ENCODE measurements at regions of chr19 and their contacts with region 1.

Region 1: DNA sequence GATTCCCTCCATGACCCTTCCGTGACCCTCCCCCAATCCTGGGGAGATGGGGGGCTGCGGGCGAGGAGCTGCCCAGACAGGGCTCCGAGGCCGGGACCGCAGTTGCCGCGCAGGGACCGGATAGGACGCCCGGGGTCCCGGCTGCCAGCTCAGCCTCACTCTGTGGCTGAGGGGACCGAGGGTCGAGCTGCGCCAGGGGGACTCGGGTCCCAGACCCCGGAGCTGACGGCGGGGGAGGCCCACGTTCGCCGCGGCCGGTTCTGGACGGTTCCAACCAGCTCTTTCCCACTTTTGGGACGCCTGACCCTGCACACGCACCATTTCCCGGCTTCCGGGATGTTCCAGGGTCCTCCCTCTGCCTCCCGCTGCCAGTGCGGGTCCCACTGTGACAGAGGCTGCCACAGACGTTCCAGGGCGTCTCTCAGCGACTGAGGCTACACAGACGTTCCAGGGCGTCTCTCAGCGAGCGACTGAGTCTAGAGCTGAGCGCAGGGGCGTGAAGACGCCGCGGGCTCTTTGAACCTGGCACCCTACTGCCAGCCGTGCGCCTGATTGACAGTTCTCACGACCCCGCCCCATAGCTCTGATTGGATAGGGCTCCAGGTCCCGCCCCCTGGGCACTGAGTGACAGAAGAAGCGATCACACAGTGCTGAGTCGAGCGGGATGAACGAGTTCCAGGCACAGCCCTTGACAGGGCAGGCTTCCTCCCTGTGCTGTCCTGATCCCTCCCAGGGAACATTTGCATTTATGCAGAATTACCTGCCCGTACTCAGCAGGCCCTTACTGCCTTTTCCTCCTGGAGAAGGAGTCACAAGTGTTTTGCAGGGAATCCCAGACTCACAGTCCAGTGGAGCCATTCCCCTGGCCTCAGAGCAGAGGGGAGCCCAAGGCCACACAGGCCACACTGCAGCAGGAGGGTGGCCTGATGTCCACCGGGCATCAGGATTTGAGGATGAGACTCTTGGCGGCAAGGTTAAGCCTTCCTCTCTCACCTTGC is at the start of gene ZNF563:
- DNase-seq: peak; percentile 97 to 99
- H3K4me3 ChIP-seq: peak within 1 kb of the TSS; percentile 82 to 94
- H3K27ac ChIP-seq: peak within 1 kb of the TSS; percentile 93 to 95
- H3K4me1 ChIP-seq: peaks cover 0 to 2% of the 10 kb centered on the region in 2 donors
- H3K27me3 ChIP-seq: no peaks in the 10 kb centered on the region
- CTCF ChIP-seq: no peak
- total RNA-seq, gene ZNF563: not detected

Region 2: DNA sequence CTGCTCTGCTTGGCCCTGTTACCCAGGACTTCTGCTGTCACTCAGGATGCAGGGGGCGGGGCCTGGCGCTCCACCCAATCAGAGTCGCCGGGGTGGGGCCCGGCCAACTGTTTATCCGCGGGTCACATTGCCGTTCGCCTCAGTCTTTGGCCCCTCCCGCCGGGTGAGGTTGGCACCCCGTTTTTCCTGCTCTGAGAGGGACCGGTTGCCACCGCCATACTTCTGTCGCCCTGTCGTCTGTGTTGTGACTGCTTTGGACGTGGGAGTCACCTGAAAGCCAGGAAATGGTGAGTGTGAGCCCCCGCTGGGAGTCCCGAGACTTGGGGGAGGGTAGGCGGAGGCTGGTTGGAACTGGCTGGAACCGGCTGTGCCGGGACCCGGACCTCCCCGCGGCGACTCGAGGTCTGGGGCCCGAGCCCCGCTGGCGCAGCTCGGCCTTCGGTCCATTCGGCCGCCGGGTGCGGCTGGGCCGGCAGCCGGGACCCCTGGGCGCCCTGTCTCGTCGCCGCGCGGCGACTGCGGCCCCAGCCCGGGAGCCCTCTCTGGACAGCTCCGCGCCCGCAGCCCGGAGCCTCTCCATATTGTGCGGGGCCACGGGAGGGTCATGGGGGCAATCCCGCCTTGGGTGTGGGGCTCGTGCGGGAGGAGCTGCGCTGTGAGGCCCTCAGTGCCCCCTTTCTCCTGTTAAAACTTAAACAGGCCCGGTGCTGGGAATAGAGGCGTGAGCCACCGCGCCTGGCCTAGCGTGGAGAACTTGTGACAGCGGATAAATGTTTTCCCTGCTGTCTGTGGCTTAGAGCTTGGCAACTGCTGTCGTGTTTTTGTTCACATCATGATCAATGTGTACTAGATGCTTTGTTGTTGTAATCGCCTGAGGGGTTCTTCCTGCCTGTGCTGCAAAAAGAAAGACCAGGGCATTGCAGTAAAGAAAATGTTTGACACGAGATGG is 268.6 kb before region 1 on chr19 and contains the start of gene ZNF844:
- intact Hi-C with region 1: loop called (anchors 10 kb)
- DNase-seq: peak; percentile 95 to 98
- H3K4me3 ChIP-seq: peak within 1 kb of the TSS; percentile 84 to 85
- H3K27ac ChIP-seq: peak within 1 kb of the TSS; percentile 87 to 93
- H3K4me1 ChIP-seq: peaks cover 3 to 7% of the 10 kb centered on the region in 2 donors
- H3K27me3 ChIP-seq: no peaks in the 10 kb centered on the region
- CTCF ChIP-seq: no peak
- total RNA-seq, gene ZNF844: 8.0 TPM

Region 3: GRCh38 chr19:12278713-12279112 is 54.7 kb before region 1 on chr19:
- intact Hi-C with region 1: no loop called
- DNase-seq: no peak
- H3K4me3 ChIP-seq: no peak overlapping the region
- H3K27ac ChIP-seq: no peak overlapping the region
- H3K4me1 ChIP-seq: no peaks in the 10 kb centered on the region
- H3K27me3 ChIP-seq: no peaks in the 10 kb centered on the region
- CTCF ChIP-seq: no peak

Region 4: DNA sequence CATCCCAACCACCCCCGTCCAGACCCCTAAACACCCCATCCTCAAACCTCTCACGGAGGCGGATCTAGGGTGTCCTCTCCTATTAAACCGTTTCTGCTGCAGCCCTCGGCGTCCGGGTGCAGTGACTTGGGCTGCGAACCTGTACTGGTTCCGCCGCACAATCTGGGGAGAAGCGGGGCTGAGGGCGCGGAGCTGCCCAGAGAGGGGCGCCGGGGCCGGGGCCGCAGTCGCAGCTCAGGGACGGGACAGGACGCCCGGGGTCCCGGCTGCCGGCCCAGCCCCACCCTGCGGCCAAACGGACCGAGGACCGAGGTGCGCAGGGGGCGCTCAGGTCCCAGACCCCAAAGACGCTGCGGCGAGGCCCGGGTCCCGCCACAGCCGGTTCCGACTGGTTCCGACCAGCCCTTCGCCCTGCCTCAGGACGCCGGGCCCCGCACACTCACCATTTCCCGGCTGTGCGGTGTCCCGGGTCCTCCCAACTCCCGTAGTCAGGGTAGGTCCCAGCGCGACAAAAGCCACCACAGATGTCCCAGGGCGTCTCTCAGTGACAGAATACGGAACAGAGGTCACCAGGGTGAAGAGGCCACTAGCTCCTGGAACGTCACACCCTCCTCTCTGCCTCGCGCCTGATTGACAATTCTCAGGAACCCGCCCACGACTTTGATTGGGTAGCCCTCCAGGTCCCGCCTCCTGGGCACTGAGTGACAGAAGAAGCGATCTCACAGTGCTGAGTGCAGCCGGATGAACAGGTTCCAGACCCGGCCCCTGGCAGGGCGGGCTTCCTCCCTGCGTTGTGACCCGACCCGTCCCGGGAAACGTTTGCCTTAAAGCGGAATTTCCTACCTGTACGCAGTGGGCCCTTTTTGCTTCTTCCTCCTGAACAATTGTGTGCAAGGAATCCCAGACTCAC is 39.0 kb before region 1 on chr19 and contains the start of gene ZNF44:
- intact Hi-C with region 1: loop called (anchors 2 kb)
- DNase-seq: peak; percentile 97 to 99
- H3K4me3 ChIP-seq: peak within 1 kb of the TSS; percentile 76 to 80
- H3K27ac ChIP-seq: peak within 1 kb of the TSS; percentile 84
- H3K4me1 ChIP-seq: peaks cover 8 to 15% of the 10 kb centered on the region in 2 donors
- H3K27me3 ChIP-seq: no peaks in the 10 kb centered on the region
- CTCF ChIP-seq: no peak
- total RNA-seq, gene ZNF44: 10.4 TPM

Region 5: GRCh38 chr19:12400633-12401502 is 67.4 kb after region 1 on chr19 and contains the start of gene ZNF799:
- intact Hi-C with region 1: loop called (anchors 5 kb)
- DNase-seq: peak; percentile 95 to 99
- H3K4me3 ChIP-seq: peak within 1 kb of the TSS; percentile 77 to 95
- H3K27ac ChIP-seq: peak within 1 kb of the TSS; percentile 74 to 80
- H3K4me1 ChIP-seq: peaks cover 3 to 4% of the 10 kb centered on the region in 2 donors
- H3K27me3 ChIP-seq: no peaks in the 10 kb centered on the region
- CTCF ChIP-seq: no peak
- total RNA-seq, gene ZNF799: 3.1 TPM

Region 6: GRCh38 chr19:12484371-12485051 is 151.1 kb after region 1 on chr19 and contains the start of gene ZNF709:
- intact Hi-C with region 1: no loop called
- DNase-seq: peak; percentile 63 to 94
- H3K4me3 ChIP-seq: peak within 1 kb of the TSS; percentile 86 to 98
- H3K27ac ChIP-seq: peak within 1 kb of the TSS; percentile 74 to 76
- H3K4me1 ChIP-seq: peaks cover 0 to 15% of the 10 kb centered on the region in 2 donors
- H3K27me3 ChIP-seq: no peaks in the 10 kb centered on the region
- CTCF ChIP-seq: no peak
- total RNA-seq, gene ZNF709: 3.4 TPM

Region 7: DNA sequence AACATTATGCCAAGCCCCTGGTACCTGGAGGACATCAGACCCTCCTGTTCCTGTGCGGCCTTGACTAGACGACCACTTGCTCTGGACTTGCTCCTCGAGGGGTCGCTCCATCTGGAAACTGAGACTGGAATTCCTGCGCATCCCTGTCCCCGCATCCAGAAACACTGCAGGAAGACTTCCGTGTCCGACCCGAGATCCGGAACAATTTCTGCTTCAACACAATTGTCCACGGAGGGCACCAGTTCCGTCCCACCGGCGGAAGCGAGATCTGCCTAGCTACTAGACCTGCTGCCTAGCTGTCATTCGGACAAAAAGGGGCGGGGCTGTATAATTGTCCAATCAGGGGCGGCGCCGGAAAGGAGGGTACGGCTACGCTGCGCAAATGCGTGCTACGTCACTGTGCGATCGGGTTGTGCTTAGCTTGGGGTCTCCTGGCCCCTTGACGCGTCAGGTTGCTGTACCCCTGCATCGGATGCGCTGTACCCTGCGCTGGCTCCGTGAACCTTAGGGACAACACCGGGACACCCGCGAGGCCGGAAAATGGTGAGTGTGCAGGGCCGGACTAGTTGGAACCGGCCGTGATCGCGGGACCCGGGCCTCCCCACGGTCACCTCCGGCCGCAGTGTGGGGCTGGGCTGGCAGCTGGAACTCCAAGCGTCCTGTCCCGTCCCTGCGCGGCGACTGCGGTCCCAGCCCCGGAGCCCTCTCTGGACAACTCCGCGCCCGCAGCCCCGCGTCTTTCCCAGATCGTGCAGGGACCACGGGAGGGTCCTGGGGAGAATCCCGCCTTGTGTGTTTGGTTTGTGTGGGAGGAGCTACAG is 277.3 kb after region 1 on chr19 and contains the starts of genes ZNF490 and ZNF791:
- intact Hi-C with region 1: loop called (anchors 10 kb)
- DNase-seq: peak; percentile 95 to 99
- H3K4me3 ChIP-seq: peak within 1 kb of the TSS; percentile 74 to 81
- H3K27ac ChIP-seq: peak within 1 kb of the TSS; percentile 96 to 100
- H3K4me1 ChIP-seq: peaks cover 0 to 28% of the 10 kb centered on the region in 2 donors
- H3K27me3 ChIP-seq: no peaks in the 10 kb centered on the region
- CTCF ChIP-seq: no peak
- total RNA-seq, gene ZNF490: 27.8 TPM
- total RNA-seq, gene ZNF791: 6.9 TPM